ENCODE measurements at regions of chr15 and their contacts with region 1.

Region 1: DNA sequence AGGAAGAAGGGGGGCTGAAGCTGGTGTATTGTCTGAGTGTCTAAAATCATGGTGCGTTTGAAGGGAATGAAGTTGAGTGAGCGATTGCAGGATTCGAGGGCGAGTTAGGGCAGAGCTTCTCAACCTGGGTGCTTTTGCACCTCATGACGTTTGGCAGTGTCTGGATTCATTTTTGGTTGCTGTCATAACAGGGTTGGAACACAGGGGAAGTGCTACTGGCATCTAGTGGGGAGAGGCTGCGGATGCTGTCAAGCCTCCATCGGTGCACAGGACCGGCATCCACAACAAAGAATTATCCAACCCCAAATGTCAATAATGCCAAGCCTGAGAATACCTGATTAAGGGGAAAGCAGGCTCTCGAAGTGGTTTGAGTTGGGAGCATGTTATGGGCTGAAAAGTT is 120.0 kb downstream of the SLCO3A1 start:
- DNase-seq: peak; percentile 67
- H3K4me3 Mint-ChIP-seq: no peak overlapping the region
- H3K27ac Mint-ChIP-seq: no peak overlapping the region
- H3K4me1 Mint-ChIP-seq: peaks cover 41% of the 10 kb centered on the region
- H3K27me3 Mint-ChIP-seq: no peaks in the 10 kb centered on the region
- CTCF ChIP-seq: peak; percentile 32

Region 2: GRCh38 chr15:91921188-91921842 is 52.2 kb before region 1 on chr15:
- CTCF ChIA-PET with region 1: no interaction called
- POLR2A ChIA-PET with region 1: no interaction called
- intact Hi-C with region 1: no loop called
- DNase-seq: no peak
- H3K4me3 Mint-ChIP-seq: no peak overlapping the region
- H3K27ac Mint-ChIP-seq: no peak overlapping the region
- H3K4me1 Mint-ChIP-seq: no peaks in the 10 kb centered on the region
- H3K27me3 Mint-ChIP-seq: no peaks in the 10 kb centered on the region
- CTCF ChIP-seq: no peak

Region 3: GRCh38 chr15:92000709-92001108 is 27.2 kb after region 1 on chr15:
- CTCF ChIA-PET with region 1: no interaction called
- POLR2A ChIA-PET with region 1: no interaction called
- intact Hi-C with region 1: loop called (anchors 1 kb)
- DNase-seq: no peak
- H3K4me3 Mint-ChIP-seq: no peak overlapping the region
- H3K27ac Mint-ChIP-seq: no peak overlapping the region
- H3K4me1 Mint-ChIP-seq: no peaks in the 10 kb centered on the region
- H3K27me3 Mint-ChIP-seq: no peaks in the 10 kb centered on the region
- CTCF ChIP-seq: no peak

Measured in MCF 10A (cell line).